ENCODE measurements at regions of chr1 and their contacts with region 1.

Region 1: DNA sequence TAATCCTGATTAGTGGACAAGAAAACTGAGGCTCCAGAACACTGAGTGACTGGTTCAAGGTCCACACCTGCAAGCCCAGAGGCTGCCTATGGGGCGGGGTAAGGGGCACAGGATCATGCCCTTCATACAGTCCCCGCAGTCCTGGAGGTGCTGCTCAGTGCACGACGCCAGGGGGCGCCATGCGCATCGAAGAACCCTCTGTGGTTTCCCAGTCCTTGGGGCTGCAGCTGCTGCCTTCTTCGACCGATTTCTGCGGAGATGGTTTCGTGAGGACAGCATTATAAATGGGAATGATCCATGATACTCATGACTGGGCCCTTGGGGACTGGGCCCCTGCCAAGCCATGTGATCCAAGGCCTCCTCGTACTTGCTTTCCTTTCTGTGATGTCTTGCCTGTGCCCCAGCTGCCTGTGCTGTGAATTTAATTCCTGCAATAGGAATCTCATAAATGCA is 37.1 kb upstream of the ARHGEF10L start:
- DNase-seq: peak; percentile 83 to 85
- H3K4me3 ChIP-seq: no peak overlapping the region
- H3K27ac ChIP-seq: peak overlapping the region; percentile 6 to 7
- H3K4me1 ChIP-seq: no peaks in the 10 kb centered on the region
- H3K27me3 ChIP-seq: no peaks in the 10 kb centered on the region
- CTCF ChIP-seq: peak; percentile 85 to 87 (median 86)
- POLR2A ChIP-seq: peak in 1 of 2 donors; percentile 9

Region 2: DNA sequence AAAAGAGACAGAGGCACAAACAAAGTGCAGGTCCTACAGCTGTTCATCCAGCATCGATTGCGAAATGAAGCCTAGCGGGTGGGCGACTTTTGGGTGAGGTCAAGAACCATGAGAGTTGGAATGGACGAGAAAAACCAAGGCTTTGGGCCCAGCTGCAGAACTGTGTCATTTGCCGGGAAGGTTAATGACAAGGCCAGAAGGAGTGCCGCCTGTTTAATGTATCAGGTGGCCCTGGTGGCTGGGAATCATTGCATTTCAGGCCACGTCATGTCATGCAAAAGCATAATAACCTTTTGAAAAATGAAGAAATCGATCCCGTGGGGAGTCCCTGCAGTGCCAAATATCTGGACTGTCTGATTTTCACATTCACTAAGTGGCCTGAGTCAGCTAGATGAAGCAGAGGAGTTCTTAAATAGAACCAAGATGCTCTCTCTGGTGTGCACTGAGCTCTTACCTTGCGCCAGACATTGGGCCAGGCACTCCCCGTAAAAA is 54.8 kb before region 1 on chr1:
- intact Hi-C with region 1: no loop called
- DNase-seq: no peak
- H3K4me3 ChIP-seq: no peak overlapping the region
- H3K27ac ChIP-seq: no peak overlapping the region
- H3K4me1 ChIP-seq: no peaks in the 10 kb centered on the region
- H3K27me3 ChIP-seq: no peaks in the 10 kb centered on the region
- CTCF ChIP-seq: no peak
- POLR2A ChIP-seq: no peak

Region 3: DNA sequence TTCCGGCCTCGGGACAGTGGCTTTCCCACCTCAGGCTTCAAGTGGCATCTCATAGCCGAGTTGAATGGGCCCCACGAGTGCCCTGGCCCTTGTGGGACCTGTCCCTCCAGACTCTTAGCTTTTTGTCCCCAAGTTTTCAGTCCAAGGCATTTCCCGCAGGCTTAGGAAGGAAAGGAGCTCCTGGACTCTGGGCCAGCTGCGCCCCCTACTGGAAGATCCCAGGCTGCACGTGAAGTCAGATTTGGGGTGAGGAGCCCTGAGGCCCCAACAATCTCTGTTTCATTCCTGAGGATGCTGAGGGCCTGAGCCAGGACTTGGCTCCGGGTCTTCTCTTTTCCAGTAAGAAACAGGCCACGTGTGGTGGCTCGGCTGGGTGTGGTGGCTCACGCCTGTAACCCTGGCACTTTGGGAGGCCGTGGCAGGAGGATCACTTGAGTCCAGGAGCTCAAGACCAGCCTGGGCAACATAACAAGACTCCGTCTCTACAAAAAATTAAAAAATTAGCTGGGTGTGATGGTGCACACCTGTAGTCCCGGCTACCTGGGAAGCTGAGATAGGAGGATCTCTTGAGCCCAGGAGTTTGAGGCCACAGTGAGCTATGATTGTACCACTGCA is 104.6 kb after region 1 on chr1:
- intact Hi-C with region 1: loop called (anchors 5 kb)
- DNase-seq: peak; percentile 72 to 75
- H3K4me3 ChIP-seq: no peak overlapping the region
- H3K27ac ChIP-seq: peak overlapping the region; percentile 39 to 57
- H3K4me1 ChIP-seq: no peaks in the 10 kb centered on the region
- H3K27me3 ChIP-seq: no peaks in the 10 kb centered on the region
- CTCF ChIP-seq: peak; percentile 84 to 89 (median 87)
- POLR2A ChIP-seq: peak in 1 of 2 donors; percentile 9